Left cardiac atrium (tissue), 4 donors: ENCODE measurements at regions of chr2 and their contacts with region 1.

Region 1: GRCh38 chr2:108583903-108584520 is 49.7 kb downstream of the LIMS1 start:
- DNase-seq: peak; percentile 58
- ATAC-seq: peak; percentile 72 to 73

Region 2: GRCh38 chr2:108351889-108352288 is 232.1 kb before region 1 on chr2:
- intact Hi-C with region 1: loop called (anchors 2 to 5 kb)
- DNase-seq: no peak
- ATAC-seq: peak; percentile 51 to 81

Region 3: GRCh38 chr2:108533832-108534583 is 50.0 kb before region 1 on chr2 and contains the start of gene LIMS1:
- intact Hi-C with region 1: loop called in 1 of 2 experiments (anchors 10 kb)
- DNase-seq: peak; percentile 93
- ATAC-seq: peak; percentile 96 to 97
- total RNA-seq, gene LIMS1: 59.8 to 65.2 TPM

Region 4: DNA sequence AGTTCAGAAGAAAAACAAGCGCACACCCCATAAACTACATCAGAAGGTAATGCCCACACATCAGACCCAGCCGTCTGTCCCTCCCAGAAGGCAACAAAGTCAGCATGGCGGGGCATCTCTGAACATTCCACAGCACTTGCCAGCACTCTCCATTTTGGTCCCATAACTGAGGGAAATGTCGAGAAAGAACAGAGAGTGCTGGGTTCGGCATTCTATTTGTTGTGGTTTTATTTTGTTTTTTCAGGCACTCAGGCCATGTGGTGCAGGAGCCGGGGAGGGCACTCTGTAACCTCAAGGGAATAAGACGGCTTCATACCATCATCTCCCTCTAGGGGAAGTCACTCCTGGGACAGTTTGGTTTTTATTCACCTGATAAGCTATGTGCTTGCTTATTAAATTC is 873.8 kb after region 1 on chr2:
- intact Hi-C with region 1: no loop called
- DNase-seq: no peak
- ATAC-seq: no peak